Colonic mucosa (tissue), 4 donors: ENCODE measurements at regions of chr3 and their contacts with region 1.

Region 1: DNA sequence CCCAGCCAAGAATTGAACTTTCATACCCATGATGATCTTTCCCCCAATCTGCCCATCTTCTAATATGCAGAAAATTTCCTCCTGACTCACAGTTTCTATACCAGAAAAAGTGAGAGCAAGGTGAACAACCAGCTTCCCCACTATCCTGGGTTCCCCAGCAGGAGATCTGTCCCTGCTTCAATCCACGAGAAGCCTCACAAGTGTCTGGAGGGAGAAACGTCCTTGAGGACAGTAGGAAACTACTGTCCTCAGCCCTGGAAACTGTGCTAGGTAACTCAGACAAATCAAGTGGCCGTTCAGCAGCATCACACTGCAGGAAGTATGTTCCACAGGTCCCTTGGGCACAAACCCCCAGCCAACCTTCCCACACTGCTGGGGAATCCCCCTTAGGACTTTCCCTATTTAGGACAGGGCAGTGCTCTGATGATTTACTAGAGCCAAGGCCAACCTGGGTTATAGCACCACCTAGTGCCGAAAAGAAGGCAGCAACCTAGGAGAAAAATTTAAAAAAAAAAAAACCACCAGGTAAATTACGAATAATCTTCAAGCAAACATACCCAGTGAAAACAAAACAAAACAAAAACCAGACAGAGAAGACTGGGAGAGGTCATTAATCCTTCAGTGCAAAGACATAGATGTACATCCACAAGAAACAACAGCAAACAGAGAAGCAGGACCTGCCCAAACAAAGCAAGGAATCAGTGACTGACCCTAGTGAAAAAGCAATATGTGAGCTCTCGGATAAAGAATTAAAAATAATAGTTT is 36.0 kb downstream of the MORC1 start:
- DNase-seq: peak; percentile 28
- H3K4me3 ChIP-seq: no peak overlapping the region
- H3K27ac ChIP-seq: no peak overlapping the region
- H3K4me1 ChIP-seq: no peaks in the 10 kb centered on the region
- H3K27me3 ChIP-seq: no peaks in the 10 kb centered on the region
- CTCF ChIP-seq: peak; percentile 72

Region 2: GRCh38 chr3:109023656-109024254 is 58.2 kb before region 1 on chr3:
- intact Hi-C with region 1: loop called (anchors 2 kb)
- DNase-seq: peak; percentile 27
- H3K4me3 ChIP-seq: no peak overlapping the region
- H3K27ac ChIP-seq: no peak overlapping the region
- H3K4me1 ChIP-seq: no peaks in the 10 kb centered on the region
- H3K27me3 ChIP-seq: no peaks in the 10 kb centered on the region
- CTCF ChIP-seq: peak; percentile 73